ENCODE measurements at regions of chr9 and their contacts with region 1.

Region 1: GRCh38 chr9:2125906-2126305 is 110.8 kb downstream of the SMARCA2 start:
- DNase-seq: no peak

Region 2: DNA sequence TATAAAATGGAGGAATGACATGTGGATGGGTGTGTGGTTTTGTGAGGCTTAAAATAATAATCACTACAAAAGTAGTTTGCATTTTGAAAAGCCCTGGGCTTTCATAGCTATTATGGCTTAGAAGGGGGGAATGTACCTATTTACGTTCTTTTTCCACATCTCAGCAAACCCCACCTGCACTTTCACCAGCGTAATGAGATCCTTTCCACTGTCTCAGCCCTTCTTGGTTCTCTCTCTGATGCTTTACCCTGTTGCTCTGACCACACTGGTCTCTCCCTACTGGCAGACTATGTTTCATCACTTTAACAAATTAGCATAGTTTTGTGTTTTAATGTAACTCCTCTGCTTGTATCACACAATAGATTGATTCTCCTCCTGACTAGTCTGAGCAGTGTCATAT is 841.2 kb before region 1 on chr9:
- intact Hi-C with region 1: loop called in 1 of 2 experiments (anchors 5 kb)
- DNase-seq: no peak

Region 3: GRCh38 chr9:2014696-2015580 is 111.0 kb before region 1 on chr9 and contains the start of gene SMARCA2:
- intact Hi-C with region 1: loop called in 1 of 2 experiments (anchors 10 kb)
- DNase-seq: peak; percentile 99
- total RNA-seq, gene SMARCA2: 152 to 174 TPM